Activated CD4-positive, alpha-beta memory T cell treated with anti-CD3 and anti-CD28 coated beads for 36 hours (primary cell): ENCODE measurements at regions of chr17 and their contacts with region 1.

Region 1: DNA sequence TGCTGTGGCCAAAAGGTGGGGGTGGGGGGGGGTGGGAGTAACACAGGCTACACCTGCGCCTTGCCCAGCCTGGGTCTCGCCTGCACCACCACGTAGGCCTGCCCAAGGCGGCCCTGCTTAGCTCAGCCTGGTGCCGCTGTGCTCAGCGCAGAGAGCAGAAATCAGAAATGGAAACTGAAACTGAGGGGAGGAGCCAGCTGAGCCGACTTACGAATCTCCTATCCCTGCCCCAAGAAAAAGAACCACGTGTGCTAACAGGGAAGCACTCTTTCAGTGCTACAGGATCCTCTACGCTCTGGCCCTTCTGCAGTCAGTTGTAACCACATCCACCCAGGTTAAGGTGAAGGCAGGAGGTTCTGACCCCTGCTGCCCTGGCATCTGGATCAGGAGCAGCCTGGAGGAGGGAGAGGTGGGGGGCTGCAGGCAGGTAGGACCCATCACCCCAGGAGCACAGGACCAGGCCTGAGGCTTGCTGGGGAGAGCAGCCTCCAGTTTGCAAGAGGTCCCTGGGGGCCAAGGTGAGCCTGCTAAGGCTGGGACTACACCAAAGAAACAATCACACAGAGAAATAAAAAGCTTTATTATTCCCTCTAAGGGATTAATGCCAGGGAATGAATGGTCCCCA is at the start of gene DHX58:
- DNase-seq: peak; percentile 89
- H3K4me3 Mint-ChIP-seq: peak within 1 kb of the TSS; percentile 78
- H3K27ac Mint-ChIP-seq: peak within 1 kb of the TSS; percentile 96
- H3K4me1 Mint-ChIP-seq: peaks cover 30% of the 10 kb centered on the region
- H3K27me3 Mint-ChIP-seq: no peaks in the 10 kb centered on the region
- total RNA-seq, gene DHX58: 38.1 to 38.4 TPM

Region 2: GRCh38 chr17:42019509-42020404 is 92.9 kb before region 1 on chr17 and contains the start of gene NKIRAS2:
- CTCF ChIA-PET with region 1: interaction called, 211 read pairs
- POLR2A ChIA-PET with region 1: interaction called, 7 read pairs
- intact Hi-C with region 1: loop called (anchors 2 kb)
- DNase-seq: peak; percentile 97
- H3K4me3 Mint-ChIP-seq: peak within 1 kb of the TSS; percentile 96
- H3K27ac Mint-ChIP-seq: peak within 1 kb of the TSS; percentile 38
- H3K4me1 Mint-ChIP-seq: peaks cover 47% of the 10 kb centered on the region
- H3K27me3 Mint-ChIP-seq: no peaks in the 10 kb centered on the region
- total RNA-seq, gene NKIRAS2: 15.6 to 16.1 TPM

Region 3: DNA sequence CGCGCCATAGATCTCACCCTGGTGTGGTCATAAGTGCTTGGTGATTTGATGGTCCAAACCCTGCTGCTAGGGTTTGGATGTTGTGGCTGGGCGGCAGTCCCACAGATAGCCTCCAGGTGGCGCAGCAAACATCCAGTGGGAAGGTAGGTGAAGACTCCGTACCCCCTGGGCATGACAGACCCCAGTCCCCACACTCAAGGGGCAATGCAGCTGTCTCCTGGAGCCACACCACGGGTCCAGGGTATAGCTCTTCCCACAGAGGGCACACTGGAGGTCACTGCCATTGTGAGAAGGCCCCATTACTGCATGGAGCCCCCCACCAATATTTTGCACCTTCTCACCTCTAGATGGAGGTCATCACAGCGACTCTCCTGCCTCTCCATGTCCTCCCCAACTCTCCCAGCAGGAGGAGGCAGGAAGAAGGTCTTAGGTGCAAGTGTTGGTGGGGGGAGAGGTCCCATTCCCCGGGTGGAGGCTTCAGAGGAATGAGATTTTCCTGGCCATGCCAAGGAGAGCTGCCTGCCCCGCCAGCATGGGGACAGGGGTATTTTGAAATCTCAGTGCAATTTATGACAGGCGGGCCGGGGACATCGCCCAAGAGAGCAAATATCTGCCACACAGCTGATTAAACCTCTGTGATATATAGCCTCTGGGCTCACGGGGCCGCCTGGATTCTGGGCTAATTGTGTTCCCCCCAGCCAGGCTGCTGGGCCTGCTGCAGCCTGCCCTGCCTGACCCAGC is 45.1 kb before region 1 on chr17:
- CTCF ChIA-PET with region 1: interaction called, 39 read pairs
- POLR2A ChIA-PET with region 1: interaction called, 4 read pairs
- intact Hi-C with region 1: loop called (anchors 1 kb)
- DNase-seq: peak; percentile 82
- H3K4me3 Mint-ChIP-seq: no peak overlapping the region
- H3K27ac Mint-ChIP-seq: no peak overlapping the region
- H3K4me1 Mint-ChIP-seq: peaks cover 5% of the 10 kb centered on the region
- H3K27me3 Mint-ChIP-seq: peaks cover 13% of the 10 kb centered on the region

Region 4: DNA sequence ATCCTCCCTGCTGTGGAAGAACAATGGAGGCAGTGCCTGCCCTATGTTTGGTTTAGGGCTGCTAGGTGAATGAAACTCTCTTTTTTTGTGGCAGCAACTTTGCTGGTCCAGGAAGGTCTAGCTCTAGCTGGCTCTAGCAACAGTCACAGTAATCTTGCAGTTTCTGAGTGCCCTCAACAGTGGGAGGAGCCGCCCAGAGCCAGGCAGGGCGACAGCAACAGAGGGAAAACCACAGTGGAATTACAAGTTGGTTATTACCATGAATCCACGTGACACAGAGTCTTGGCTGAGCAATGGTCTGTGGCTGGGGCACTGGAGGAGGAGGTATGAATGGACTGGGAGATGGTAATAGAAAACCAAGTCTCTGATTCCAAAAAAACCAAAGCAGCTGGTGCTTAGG is 20.3 kb after region 1 on chr17:
- CTCF ChIA-PET with region 1: interaction called, 11 read pairs
- POLR2A ChIA-PET with region 1: interaction called, 7 read pairs
- intact Hi-C with region 1: no loop called
- DNase-seq: peak; percentile 69
- H3K4me3 Mint-ChIP-seq: no peak overlapping the region
- H3K27ac Mint-ChIP-seq: peak overlapping the region; percentile 77
- H3K4me1 Mint-ChIP-seq: peaks cover 58% of the 10 kb centered on the region
- H3K27me3 Mint-ChIP-seq: no peaks in the 10 kb centered on the region

Region 5: GRCh38 chr17:42146911-42147607 is 34.4 kb after region 1 on chr17:
- CTCF ChIA-PET with region 1: no interaction called
- POLR2A ChIA-PET with region 1: no interaction called
- intact Hi-C with region 1: no loop called
- DNase-seq: no peak
- H3K4me3 Mint-ChIP-seq: no peak overlapping the region
- H3K27ac Mint-ChIP-seq: peak overlapping the region; percentile 18
- H3K4me1 Mint-ChIP-seq: peaks cover 31% of the 10 kb centered on the region
- H3K27me3 Mint-ChIP-seq: no peaks in the 10 kb centered on the region

Region 6: GRCh38 chr17:42586514-42587230 is 474.0 kb after region 1 on chr17:
- CTCF ChIA-PET with region 1: no interaction called
- POLR2A ChIA-PET with region 1: no interaction called
- intact Hi-C with region 1: no loop called
- DNase-seq: no peak
- H3K4me3 Mint-ChIP-seq: no peak overlapping the region
- H3K27ac Mint-ChIP-seq: peak overlapping the region; percentile 60
- H3K4me1 Mint-ChIP-seq: peaks cover 2% of the 10 kb centered on the region
- H3K27me3 Mint-ChIP-seq: no peaks in the 10 kb centered on the region